CD4-positive, alpha-beta T cell (primary cell): ENCODE measurements at regions of chr10 and their contacts with region 1.

Region 1: DNA sequence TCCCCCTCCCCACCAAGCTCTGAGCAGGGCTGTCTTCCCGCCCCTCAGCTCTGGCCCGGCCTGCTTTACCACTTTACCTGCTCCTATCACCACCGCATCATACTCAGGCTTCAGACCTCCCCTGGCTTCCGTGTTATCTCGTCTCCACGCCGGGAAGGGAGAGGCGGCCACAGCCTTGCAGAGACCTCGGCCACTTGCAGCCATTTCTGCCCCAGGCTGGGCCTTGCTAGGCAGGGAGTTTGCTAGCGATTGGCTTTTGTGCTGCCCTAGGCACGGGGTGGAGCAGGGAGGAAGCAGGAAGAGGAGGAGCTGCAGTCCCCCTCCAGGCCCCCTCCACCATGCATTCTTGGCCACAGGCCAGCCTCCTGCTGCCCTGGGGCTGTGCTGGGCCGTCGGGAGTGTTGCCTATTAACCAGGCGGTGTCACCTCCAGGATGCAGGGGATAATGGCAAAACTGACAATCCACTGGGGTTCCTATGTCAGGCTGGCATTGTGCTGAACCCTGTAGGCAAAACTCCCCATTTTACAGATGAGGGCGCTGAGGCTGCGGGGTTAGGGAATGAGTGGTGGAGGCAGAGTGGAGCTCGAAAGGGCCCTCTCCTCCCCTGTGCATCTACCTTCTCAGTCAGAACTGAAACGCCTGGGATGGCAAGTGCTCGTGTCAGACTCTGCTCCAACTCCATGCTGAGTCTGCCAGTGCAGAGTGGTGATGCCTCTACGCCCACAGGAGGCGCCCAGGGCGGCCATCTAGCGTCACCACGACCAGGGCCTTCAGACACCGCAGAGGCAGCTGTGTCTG is at the start of gene PYROXD2:
- DNase-seq: peak; percentile 16 to 80 (median 48)
- ATAC-seq: peak; percentile 85
- H3K4me3 ChIP-seq: peak within 1 kb of the TSS; percentile 59
- H3K4me3 Mint-ChIP-seq: peak within 1 kb of the TSS; percentile 98
- H3K27ac ChIP-seq: peak within 1 kb of the TSS; percentile 45 to 73
- H3K27ac Mint-ChIP-seq: peak within 1 kb of the TSS; percentile 95
- H3K4me1 ChIP-seq: peaks cover 17% of the 10 kb centered on the region
- H3K4me1 Mint-ChIP-seq: peaks cover 26% of the 10 kb centered on the region
- H3K27me3 ChIP-seq: no peaks in the 10 kb centered on the region
- H3K27me3 Mint-ChIP-seq: no peaks in the 10 kb centered on the region
- CTCF ChIP-seq: no peak
- total RNA-seq, gene PYROXD2: 8.5 to 9.8 TPM

Region 2: GRCh38 chr10:98399784-98400183 is 15.3 kb before region 1 on chr10:
- CTCF ChIA-PET with region 1: no interaction called
- POLR2A ChIA-PET with region 1: no interaction called
- intact Hi-C with region 1: no loop called
- DNase-seq: no peak
- ATAC-seq: no peak
- H3K4me3 ChIP-seq: no peak overlapping the region
- H3K4me3 Mint-ChIP-seq: no peak overlapping the region
- H3K27ac ChIP-seq: no peak overlapping the region
- H3K27ac Mint-ChIP-seq: no peak overlapping the region
- H3K4me1 ChIP-seq: no peaks in the 10 kb centered on the region
- H3K4me1 Mint-ChIP-seq: no peaks in the 10 kb centered on the region
- H3K27me3 ChIP-seq: no peaks in the 10 kb centered on the region
- H3K27me3 Mint-ChIP-seq: no peaks in the 10 kb centered on the region
- CTCF ChIP-seq: no peak

Region 3: GRCh38 chr10:98425511-98426352 is 10.6 kb after region 1 on chr10:
- CTCF ChIA-PET with region 1: interaction called, 11 read pairs
- POLR2A ChIA-PET with region 1: no interaction called
- intact Hi-C with region 1: no loop called
- DNase-seq: peak in 11 of 14 experiments; percentile 13 to 70 (median 35)
- ATAC-seq: peak; percentile 62
- H3K4me3 ChIP-seq: no peak overlapping the region
- H3K4me3 Mint-ChIP-seq: no peak overlapping the region
- H3K27ac ChIP-seq: no peak overlapping the region
- H3K27ac Mint-ChIP-seq: no peak overlapping the region
- H3K4me1 ChIP-seq: peaks cover 6% of the 10 kb centered on the region
- H3K4me1 Mint-ChIP-seq: no peaks in the 10 kb centered on the region
- H3K27me3 ChIP-seq: no peaks in the 10 kb centered on the region
- H3K27me3 Mint-ChIP-seq: no peaks in the 10 kb centered on the region
- CTCF ChIP-seq: peak; percentile 64

Region 4: DNA sequence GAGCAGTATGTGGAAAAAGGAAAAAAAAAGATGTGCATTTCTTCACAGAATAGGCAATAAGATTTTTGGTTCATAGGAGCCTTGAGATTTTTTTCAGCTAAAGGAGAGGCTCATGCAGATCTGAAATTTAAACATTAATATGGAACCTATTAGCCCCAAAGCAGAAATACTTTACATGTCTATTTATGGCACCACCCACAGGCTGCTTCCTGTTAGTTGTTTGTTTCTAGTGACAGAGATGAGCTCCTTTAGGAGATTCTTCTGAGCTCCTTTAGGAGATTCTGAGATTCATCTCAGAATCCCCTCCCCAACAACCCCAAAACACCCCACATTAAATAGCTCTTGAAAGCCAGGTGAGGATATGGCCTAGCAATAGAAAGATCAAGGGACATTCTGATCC is 59.5 kb after region 1 on chr10:
- CTCF ChIA-PET with region 1: no interaction called
- POLR2A ChIA-PET with region 1: no interaction called
- intact Hi-C with region 1: no loop called
- DNase-seq: no peak
- ATAC-seq: no peak
- H3K4me3 ChIP-seq: no peak overlapping the region
- H3K4me3 Mint-ChIP-seq: no peak overlapping the region
- H3K27ac ChIP-seq: no peak overlapping the region
- H3K27ac Mint-ChIP-seq: no peak overlapping the region
- H3K4me1 ChIP-seq: no peaks in the 10 kb centered on the region
- H3K4me1 Mint-ChIP-seq: no peaks in the 10 kb centered on the region
- H3K27me3 ChIP-seq: peaks cover 0 to 3% of the 10 kb centered on the region in 2 experiments
- H3K27me3 Mint-ChIP-seq: peaks cover 16% of the 10 kb centered on the region
- CTCF ChIP-seq: no peak